ENCODE measurements at regions of chr18 and their contacts with region 1.

Region 1: GRCh38 chr18:11883153-11883552 is 25.0 kb downstream of the MPPE1 start:
- DNase-seq: peak; percentile 81
- ATAC-seq: peak; percentile 94
- H3K4me3 ChIP-seq: no peak overlapping the region
- H3K4me3 Mint-ChIP-seq: peak overlapping the region; percentile 52
- H3K27ac ChIP-seq: peak overlapping the region; percentile 41 to 61
- H3K27ac Mint-ChIP-seq: peak overlapping the region; percentile 75
- H3K4me1 ChIP-seq: peaks cover 35 to 44% of the 10 kb centered on the region in 2 donors
- H3K4me1 Mint-ChIP-seq: peaks cover 44% of the 10 kb centered on the region
- H3K27me3 ChIP-seq: no peaks in the 10 kb centered on the region
- H3K27me3 Mint-ChIP-seq: no peaks in the 10 kb centered on the region
- CTCF ChIP-seq: no peak

Region 2: DNA sequence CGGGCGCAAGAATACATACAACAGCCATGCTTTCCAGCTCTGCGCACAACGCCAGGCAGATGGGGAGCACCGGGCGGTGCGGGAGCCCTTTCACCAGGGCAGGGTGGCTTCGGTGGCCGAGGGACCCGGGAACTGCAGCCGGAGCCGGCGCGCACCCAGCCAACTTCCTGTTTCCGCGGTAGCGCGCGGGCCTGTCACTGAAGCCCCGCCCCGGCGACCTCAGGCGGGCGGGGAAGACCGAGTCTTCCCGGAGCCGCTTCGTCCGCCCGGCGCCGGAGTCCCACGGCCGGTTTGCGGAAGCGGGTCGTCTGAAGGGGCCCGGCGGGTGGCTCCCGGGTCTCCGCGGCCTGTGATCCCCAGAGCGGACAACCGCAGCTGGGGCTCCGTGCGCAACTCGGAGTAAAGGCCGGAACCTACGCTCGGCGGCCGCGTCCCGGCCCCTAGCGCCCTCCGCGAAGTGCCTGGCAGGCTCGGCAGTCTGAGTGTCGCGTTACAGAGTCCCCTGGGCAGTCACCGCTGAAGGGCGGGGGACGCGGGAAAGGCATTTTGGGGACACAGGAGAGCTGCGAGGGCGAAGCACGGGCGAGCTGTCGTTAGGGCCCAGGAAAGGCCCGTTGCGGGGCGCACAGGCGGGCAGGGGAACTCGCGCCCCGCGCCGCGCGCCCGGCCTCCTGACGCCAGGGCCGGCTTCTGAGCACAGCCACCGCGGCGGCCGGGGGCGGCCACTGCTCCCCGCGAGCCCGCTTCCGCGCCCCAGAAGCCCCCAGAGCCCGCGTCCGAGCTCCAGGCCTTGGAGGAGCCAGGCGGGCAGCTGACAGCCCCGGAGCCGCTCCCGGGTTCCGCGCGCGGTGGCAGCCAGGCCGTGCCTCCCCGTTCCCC is 25.3 kb after region 1 on chr18 and contains the start of gene MPPE1:
- CTCF ChIA-PET with region 1: no interaction called
- POLR2A ChIA-PET with region 1: no interaction called
- intact Hi-C with region 1: loop called (anchors 1 kb)
- DNase-seq: peak; percentile 94
- ATAC-seq: peak; percentile 92
- H3K4me3 ChIP-seq: peak within 1 kb of the TSS; percentile 75 to 96 (median 84)
- H3K4me3 Mint-ChIP-seq: peak within 1 kb of the TSS; percentile 93
- H3K27ac ChIP-seq: peak within 1 kb of the TSS; percentile 93 to 97
- H3K27ac Mint-ChIP-seq: peak within 1 kb of the TSS; percentile 94
- H3K4me1 ChIP-seq: peaks cover 13 to 18% of the 10 kb centered on the region in 2 donors
- H3K4me1 Mint-ChIP-seq: peaks cover 21% of the 10 kb centered on the region
- H3K27me3 ChIP-seq: no peaks in the 10 kb centered on the region
- H3K27me3 Mint-ChIP-seq: no peaks in the 10 kb centered on the region
- CTCF ChIP-seq: no peak
- total RNA-seq, gene MPPE1: 57.5 and 69.7 TPM in 2 replicates

Measured in B cell (primary cell).